ENCODE measurements at regions of chr3 and their contacts with region 1.

Region 1: DNA sequence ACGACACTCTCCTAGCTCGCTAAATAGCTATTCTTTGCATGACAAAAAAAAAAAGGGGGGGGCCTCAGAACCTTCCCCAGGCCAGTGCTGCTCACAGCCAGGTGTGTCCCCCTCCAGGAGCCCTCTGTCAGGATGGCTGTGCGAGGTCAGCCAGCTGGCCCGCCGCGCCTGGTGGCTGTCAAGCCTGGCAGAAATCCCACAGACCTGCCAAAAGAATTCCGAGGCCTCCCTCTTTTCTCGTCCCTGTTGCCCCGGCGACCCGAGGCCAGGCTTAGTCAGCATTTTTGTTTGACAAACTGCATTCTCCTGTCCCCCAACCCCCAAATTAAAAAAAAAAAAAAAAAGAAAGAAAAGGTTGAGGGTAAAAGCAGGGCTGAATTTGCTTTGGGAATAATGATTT is 61.9 kb downstream of the TM4SF4 start:
- DNase-seq: peak in 1 of 2 experiments; percentile 63
- H3K4me3 ChIP-seq: peak overlapping the region in 1 of 4 experiments; percentile 21; a peak in 1 of 8 replicates
- H3K27ac ChIP-seq: no peak overlapping the region
- H3K4me1 ChIP-seq: peaks cover 2 to 10% (median 6%) of the 10 kb centered on the region in 4 experiments; a peak in 5 of 7 replicates
- H3K27me3 ChIP-seq: no peaks in the 10 kb centered on the region
- CTCF ChIP-seq: no peak
- EP300 ChIP-seq: no peak
- POLR2A ChIP-seq: no peak
- RAD21 ChIP-seq: no peak

Region 2: DNA sequence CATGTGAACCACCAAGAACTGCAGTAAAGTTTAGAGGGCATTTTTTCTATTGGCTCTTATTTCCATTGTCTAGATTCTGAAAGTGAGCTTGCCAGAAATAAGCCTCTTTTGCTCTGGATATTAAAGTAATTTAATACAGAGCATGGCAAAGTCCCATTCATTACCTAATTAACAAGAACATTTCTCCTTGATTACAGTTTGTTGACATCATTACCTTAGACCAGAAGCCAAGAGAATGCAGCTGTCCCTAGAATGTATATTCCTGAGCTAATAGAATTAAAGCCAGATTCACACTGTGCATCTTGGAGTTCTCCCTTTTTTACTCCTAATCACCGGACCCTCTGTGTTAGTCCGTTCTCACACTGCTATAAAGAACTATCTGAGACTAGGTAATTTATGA is 108.3 kb before region 1 on chr3:
- CTCF ChIA-PET with region 1: no interaction called
- POLR2A ChIA-PET with region 1: no interaction called
- DNase-seq: no peak
- H3K4me3 ChIP-seq: no peak overlapping the region
- H3K27ac ChIP-seq: no peak overlapping the region
- H3K4me1 ChIP-seq: peaks cover 0 to 2% (median 0%) of the 10 kb centered on the region in 4 experiments; a peak in 1 of 7 replicates
- H3K27me3 ChIP-seq: no peaks in the 10 kb centered on the region
- CTCF ChIP-seq: no peak
- EP300 ChIP-seq: no peak
- POLR2A ChIP-seq: no peak
- RAD21 ChIP-seq: no peak

Region 3: DNA sequence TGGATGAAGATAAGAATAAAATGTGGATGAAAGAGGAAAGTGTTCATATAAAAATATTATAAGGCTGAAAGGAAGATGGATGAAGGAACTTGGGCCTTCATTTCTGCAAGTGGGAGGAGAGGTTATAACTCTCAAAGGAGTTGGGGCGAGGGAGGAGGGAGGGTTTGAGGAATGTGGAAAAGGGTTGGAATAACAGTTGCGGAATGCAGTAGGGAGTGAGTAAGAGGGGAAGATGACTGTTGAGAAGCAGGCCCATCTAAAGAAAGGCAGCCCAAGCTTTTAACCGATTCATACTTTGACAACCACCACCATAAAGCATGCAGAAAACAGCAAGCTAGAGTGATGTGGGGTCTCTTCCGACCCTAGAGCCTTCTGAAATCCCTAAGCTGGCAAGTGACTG is 70.2 kb before region 1 on chr3:
- CTCF ChIA-PET with region 1: no interaction called
- POLR2A ChIA-PET with region 1: no interaction called
- DNase-seq: peak in 1 of 2 experiments; percentile 7
- H3K4me3 ChIP-seq: no peak overlapping the region
- H3K27ac ChIP-seq: no peak overlapping the region
- H3K4me1 ChIP-seq: peaks cover 0 to 4% (median 0%) of the 10 kb centered on the region in 4 experiments; a peak in 3 of 7 replicates
- H3K27me3 ChIP-seq: no peaks in the 10 kb centered on the region
- CTCF ChIP-seq: no peak
- EP300 ChIP-seq: no peak
- POLR2A ChIP-seq: no peak
- RAD21 ChIP-seq: no peak

Region 4: DNA sequence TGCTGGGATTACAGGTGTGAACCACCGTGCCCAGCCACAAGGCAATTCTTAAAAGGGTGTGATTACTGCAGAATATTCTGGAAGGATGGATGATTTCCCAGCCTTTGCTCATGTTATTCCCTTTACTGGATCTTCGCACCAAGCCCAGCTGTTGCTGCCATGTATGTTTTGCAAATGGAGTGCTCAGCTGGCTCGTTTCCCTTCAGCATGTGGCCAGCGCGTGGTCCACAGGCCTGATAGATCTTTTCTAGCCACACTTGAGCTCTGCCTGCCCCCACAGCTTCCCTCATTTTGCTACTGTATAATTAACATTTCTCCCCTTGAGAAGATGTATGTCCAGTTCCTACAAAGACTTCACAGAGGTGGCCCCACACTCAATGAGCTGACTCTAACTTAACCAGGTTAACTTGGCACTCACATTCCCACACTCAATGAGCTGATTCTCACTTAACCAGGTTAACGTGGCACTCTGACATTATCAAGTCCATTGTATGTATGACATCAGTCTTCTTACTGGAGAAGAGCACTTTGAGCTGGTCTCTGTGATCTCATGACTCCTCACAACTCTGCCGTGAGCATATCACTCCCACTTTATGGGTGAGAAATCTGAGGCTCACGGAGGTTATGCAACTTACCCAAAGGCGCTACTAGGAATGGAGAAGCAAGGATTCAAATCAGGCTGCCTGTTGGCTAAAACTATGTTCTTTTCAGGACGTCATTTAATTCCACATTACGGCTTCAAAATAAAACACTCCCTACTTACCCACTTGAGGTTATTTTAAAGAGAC is 12.7 kb before region 1 on chr3:
- CTCF ChIA-PET with region 1: interaction called, 22 read pairs
- POLR2A ChIA-PET with region 1: no interaction called
- DNase-seq: no peak
- H3K4me3 ChIP-seq: no peak overlapping the region
- H3K27ac ChIP-seq: no peak overlapping the region
- H3K4me1 ChIP-seq: no peaks in the 10 kb centered on the region
- H3K27me3 ChIP-seq: no peaks in the 10 kb centered on the region
- CTCF ChIP-seq: no peak
- EP300 ChIP-seq: no peak
- POLR2A ChIP-seq: no peak
- RAD21 ChIP-seq: no peak

Region 5: GRCh38 chr3:149566292-149566975 is 30.0 kb after region 1 on chr3:
- CTCF ChIA-PET with region 1: interaction called, 31 read pairs
- POLR2A ChIA-PET with region 1: no interaction called
- DNase-seq: no peak
- H3K4me3 ChIP-seq: no peak overlapping the region
- H3K27ac ChIP-seq: no peak overlapping the region
- H3K4me1 ChIP-seq: peaks cover 0 to 6% (median 3%) of the 10 kb centered on the region in 4 experiments; a peak in 4 of 7 replicates
- H3K27me3 ChIP-seq: no peaks in the 10 kb centered on the region
- CTCF ChIP-seq: no peak
- EP300 ChIP-seq: no peak
- POLR2A ChIP-seq: no peak
- RAD21 ChIP-seq: no peak

Region 6: GRCh38 chr3:149657926-149658733 is 121.7 kb after region 1 on chr3 and contains the start of gene WWTR1:
- CTCF ChIA-PET with region 1: interaction called, 14 read pairs
- POLR2A ChIA-PET with region 1: interaction called, 6 read pairs
- DNase-seq: peak; percentile 88 to 90
- H3K4me3 ChIP-seq: peak within 1 kb of the TSS; percentile 53 to 83 (median 73)
- H3K27ac ChIP-seq: peak within 1 kb of the TSS; percentile 98
- H3K4me1 ChIP-seq: peaks cover 0 to 7% (median 2%) of the 10 kb centered on the region in 4 experiments
- H3K27me3 ChIP-seq: peaks cover 0 to 12% (median 8%) of the 10 kb centered on the region in 4 experiments; a peak in 4 of 7 replicates
- CTCF ChIP-seq: no peak
- EP300 ChIP-seq: peak in 1 of 2 experiments; percentile 7; a peak in 1 of 3 replicates
- POLR2A ChIP-seq: peak; percentile 86 to 93
- RAD21 ChIP-seq: peak in 1 of 2 experiments; percentile 29; a peak in 1 of 4 replicates
- total RNA-seq, gene WWTR1: 18.6 and 19.2 TPM in 2 replicates

Region 7: GRCh38 chr3:149717391-149718056 is 181.1 kb after region 1 on chr3:
- CTCF ChIA-PET with region 1: interaction called, 15 read pairs
- POLR2A ChIA-PET with region 1: no interaction called
- DNase-seq: peak in 1 of 2 experiments; percentile 57
- H3K4me3 ChIP-seq: no peak overlapping the region
- H3K27ac ChIP-seq: no peak overlapping the region
- H3K4me1 ChIP-seq: no peaks in the 10 kb centered on the region; a peak in 1 of 7 replicates
- H3K27me3 ChIP-seq: no peaks in the 10 kb centered on the region
- CTCF ChIP-seq: peak in 2 of 3 experiments; percentile 59 to 74; a peak in 2 of 4 replicates
- EP300 ChIP-seq: no peak
- POLR2A ChIP-seq: no peak
- RAD21 ChIP-seq: peak; percentile 81 to 82